ENCODE measurements at regions of chr15 and their contacts with region 1.

Region 1: GRCh38 chr15:63497642-63498467 is 6.5 kb upstream of the USP3 start:
- DNase-seq: peak; percentile 88
- H3K4me3 Mint-ChIP-seq: no peak overlapping the region
- H3K27ac Mint-ChIP-seq: no peak overlapping the region
- H3K4me1 Mint-ChIP-seq: peaks cover 64% of the 10 kb centered on the region
- H3K27me3 Mint-ChIP-seq: no peaks in the 10 kb centered on the region

Region 2: DNA sequence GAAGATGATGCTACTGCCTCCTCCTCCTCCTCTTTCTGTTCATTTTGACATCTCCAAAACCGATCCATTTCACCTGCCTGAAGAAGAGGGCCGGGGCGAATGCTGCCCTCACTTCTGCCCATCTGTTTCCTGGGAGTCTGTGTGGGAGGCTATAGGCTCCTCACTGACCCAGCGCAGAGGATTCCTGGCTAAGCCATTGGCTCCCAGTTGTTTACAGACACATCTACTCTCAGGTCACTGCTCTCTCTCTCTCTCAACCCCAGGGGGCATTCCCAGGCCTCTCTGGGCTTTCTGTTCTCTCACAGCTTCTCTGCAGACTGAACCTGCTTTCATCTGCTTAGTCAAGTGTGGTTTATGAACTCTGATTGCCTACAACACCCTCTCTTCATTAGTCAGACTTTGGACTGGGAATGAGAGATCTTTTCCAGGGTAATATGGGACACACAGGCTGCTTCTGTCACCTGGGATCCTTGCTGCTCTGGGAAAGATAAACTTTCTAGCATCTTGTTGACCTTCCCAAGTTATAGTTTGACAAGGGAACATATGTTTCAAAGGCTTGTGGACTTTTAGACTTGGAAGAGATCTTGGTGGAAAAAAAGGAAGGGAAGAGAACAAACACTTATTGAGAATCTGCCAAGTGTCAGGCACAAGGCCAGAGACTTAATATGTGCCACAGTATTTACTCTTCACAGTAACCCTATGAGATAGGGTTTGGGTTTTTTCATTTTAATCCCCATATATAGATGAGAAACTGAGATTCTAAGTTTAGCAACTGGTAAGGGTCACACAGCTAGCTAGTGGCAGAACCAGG is 23.7 kb before region 1 on chr15:
- intact Hi-C with region 1: loop called (anchors 1 kb)
- DNase-seq: peak; percentile 85
- H3K4me3 Mint-ChIP-seq: peak overlapping the region; percentile 11
- H3K27ac Mint-ChIP-seq: peak overlapping the region; percentile 95
- H3K4me1 Mint-ChIP-seq: peaks cover 41% of the 10 kb centered on the region
- H3K27me3 Mint-ChIP-seq: no peaks in the 10 kb centered on the region

Region 3: DNA sequence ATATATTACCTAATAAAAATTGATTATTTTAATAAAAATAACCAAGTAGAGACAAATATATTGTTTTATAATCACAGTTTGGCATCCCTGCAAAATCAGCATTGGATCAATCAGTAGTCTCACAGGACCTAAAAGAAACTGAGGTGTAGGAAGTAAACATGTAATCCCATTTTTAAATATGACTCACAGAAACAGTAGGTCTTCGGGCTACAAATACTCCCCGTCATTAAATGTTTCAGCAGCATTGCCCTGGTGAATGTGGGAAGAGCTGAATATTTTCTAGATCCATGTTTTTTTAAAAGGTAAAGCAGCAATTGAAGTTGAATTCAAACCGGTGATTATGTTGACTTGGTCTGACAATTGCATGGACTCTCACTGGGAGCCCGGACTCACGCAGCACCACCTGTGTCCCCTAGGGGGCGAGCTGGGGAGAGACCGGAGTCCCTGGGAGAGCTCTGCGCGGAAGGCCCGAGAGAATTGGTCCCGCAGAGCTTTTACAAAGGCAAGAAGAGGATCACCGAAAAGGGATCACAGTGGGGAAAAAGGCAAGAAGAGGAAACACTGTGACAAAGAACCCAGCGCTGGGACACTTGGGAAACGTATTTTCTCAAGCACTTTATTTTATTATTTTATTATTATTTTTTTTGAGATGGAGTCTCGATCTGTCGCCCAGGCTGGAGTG is 10.6 kb before region 1 on chr15:
- intact Hi-C with region 1: loop called (anchors 1 kb)
- DNase-seq: peak; percentile 97
- H3K4me3 Mint-ChIP-seq: peak overlapping the region; percentile 63
- H3K27ac Mint-ChIP-seq: peak overlapping the region; percentile 80
- H3K4me1 Mint-ChIP-seq: peaks cover 47% of the 10 kb centered on the region
- H3K27me3 Mint-ChIP-seq: no peaks in the 10 kb centered on the region